ENCODE measurements at regions of chrX and their contacts with region 1.

Region 1: GRCh38 chrX:55142206-55142918 is 53.5 kb downstream of the PAGE2 start:
- DNase-seq: no peak

Region 2: DNA sequence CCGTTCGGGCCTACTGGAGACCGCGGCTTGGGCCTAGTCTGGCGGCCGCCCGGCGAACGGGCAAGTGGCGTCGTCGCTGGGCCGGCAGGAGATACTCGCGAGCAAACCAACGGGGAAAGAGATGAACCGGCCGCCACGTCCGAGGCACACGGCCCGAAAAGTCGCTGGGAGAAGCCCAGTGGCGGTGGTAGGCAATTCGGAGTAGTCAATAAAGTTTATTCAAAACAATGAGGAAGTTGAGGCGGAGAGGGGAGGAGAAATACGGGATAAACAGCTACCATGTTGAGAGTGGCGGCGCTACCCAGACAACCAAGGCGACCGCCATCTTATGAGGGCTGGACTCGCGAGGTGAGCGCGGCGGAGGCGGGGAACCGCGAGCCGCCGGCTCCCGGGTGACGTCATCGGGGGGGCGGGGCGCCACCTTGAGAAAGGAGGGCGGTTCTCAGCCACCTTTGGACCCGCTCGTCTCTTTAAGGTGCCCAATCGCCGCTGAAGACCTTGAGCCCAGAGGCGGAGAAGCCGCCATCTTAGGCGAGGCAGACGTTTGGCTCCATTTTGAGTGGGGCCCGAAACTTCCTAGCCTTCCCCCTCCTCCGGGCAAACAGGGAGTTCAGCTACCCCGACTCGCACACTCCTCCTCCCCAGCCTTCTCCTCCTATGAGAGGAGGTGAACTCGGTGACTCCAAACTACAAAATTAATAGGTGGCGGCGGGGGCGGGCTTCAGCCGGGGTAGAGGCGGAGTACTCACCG is 1098.1 kb before region 1 on chrX and contains the start of gene PHF8:
- intact Hi-C with region 1: loop called in 1 of 2 experiments (anchors 5 kb)
- DNase-seq: peak; percentile 97
- total RNA-seq, gene PHF8: 18.9 to 21.3 TPM

Region 3: GRCh38 chrX:55129361-55129760 is 13.0 kb before region 1 on chrX:
- intact Hi-C with region 1: loop called in 1 of 2 experiments (anchors 1 kb)
- DNase-seq: no peak

Region 4: DNA sequence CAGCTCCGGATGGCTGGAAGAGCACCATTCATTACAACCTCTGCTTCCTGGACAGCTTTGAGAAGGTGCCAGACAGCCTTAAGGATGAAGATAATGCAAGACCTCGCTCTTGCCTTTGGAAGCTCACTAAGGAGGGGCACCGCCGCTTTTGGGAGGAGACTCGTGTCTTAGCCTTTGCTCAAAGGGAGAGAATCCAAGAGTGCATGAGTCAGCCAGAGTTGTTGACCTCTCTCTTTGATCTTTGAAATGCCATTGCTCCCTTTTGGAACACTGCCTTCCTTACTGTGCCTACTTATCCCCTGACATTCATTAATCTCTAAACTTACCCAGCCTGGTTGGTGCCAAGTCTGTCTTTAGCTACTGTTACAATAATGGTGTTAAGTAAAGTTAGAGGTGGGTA is 482.0 kb after region 1 on chrX:
- intact Hi-C with region 1: no loop called
- DNase-seq: no peak

Measured in posterior vena cava (tissue), 2 donors.